Right cardiac atrium (tissue), 5 donors: ENCODE measurements at regions of chr10 and their contacts with region 1.

Region 1: DNA sequence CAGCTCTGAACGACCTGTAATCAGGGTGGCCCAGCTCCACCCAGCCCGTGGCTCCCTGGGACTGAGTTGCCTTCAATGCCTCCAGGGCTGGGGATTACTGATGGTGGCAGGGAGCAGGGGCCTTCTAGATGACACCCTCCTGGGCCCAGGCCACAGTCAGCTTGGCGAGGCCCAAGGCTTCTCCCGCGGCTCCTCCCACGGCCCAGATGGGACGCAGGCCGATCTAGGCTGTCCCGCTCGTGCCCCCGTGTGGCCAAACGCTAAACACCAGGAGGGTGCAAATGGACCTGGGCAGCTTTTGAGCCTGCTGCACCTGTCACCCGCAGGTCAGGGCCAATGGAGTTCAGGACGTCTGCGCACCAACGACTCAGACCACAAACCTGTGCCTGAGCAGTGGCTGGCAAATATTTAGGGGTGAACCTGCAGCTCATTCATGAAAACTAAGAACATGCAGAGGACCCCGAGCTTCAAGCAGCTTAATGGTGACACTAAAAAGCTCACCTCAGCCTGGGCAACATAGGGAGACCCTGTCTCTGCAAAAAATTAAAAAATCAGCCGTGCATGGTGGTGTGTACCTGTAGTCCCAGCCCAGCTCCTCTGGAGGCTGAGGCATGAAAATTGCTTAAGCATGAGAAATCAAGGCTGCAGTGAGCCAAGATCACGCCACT is 43.2 kb downstream of the ASB13 start:
- DNase-seq: peak; percentile 91 to 96 (median 95)
- ATAC-seq: peak; percentile 88 to 92
- H3K4me3 ChIP-seq: no peak overlapping the region
- H3K27ac ChIP-seq: no peak overlapping the region
- H3K4me1 ChIP-seq: no peaks in the 10 kb centered on the region
- H3K27me3 ChIP-seq: no peaks in the 10 kb centered on the region

Region 2: GRCh38 chr10:5396556-5397300 is 226.5 kb before region 1 on chr10:
- intact Hi-C with region 1: no loop called
- DNase-seq: no peak
- ATAC-seq: no peak
- H3K4me3 ChIP-seq: no peak overlapping the region
- H3K27ac ChIP-seq: no peak overlapping the region
- H3K4me1 ChIP-seq: no peaks in the 10 kb centered on the region
- H3K27me3 ChIP-seq: no peaks in the 10 kb centered on the region

Region 3: DNA sequence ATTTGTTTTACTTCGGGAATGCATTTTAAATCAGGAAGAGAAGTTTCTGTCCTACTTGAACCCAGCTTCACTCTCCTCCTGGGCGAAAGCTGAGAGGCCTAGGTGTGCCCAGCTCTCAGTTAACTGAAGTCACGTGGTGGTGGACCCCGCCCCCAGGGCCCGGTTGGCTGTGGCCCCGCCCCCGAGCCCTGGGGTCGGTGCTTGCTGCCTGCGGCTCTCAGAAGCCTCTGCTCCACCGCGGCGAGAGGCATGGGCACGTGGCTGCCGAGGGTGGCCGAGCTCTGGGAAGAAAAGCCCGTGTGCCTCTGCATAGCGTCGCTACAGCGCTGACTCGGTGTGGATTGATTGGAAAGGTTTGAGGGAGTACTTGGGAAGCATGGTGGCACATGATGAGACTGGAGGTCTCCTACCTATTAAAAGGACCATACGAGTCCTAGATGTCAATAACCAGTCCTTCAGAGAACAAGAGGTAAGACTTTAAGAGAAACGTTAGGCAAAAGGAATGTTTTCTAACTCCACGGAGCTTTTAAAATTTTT is 176.8 kb before region 1 on chr10:
- intact Hi-C with region 1: loop called (anchors 2 to 5 kb)
- DNase-seq: peak; percentile 92 to 98 (median 96)
- ATAC-seq: peak; percentile 98 to 99
- H3K4me3 ChIP-seq: peak overlapping the region; percentile 68
- H3K27ac ChIP-seq: peak overlapping the region; percentile 14
- H3K4me1 ChIP-seq: no peaks in the 10 kb centered on the region
- H3K27me3 ChIP-seq: no peaks in the 10 kb centered on the region